K562 (cell line): ENCODE measurements at regions of chr9 and their contacts with region 1.

Region 1: DNA sequence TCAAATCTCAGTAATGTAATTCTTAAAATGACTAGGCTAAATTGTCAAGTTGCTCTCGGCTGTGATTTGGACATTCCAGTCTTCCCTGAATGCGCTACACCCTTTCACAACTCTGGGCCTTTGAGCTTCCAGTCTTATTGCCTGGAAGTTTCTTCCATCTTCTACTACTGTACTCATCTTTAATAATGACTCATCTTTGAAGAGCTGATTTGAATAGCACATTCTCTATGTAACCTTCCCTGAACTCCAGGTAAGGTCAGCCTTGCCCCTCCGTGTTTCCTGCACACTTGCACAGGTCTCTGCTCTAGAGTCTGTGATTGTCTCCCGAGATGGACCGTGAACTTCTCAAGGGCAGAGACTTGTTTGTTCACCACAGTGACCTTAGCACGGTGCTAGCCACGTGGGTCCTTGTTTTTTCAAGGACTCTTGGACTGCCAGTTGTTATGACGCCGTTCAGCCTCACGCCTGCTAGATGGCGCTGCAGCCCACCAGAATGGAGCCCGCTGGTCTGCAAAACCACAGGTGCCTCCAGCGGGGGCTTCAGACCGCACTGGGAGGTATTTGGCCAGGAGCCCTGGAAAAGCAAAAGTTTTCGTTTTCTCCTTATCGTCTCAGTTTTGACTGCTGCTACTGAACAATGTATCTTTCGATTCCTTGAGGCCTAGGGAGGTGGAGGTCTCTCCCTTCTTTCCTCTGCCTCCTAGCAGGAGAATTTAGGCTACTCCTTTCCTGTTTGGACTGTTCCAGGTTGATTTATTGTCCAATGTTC is 44.4 kb downstream of the SEC61B start:
- DNase-seq: peak; percentile 61 to 84 (median 73)
- ATAC-seq: peak; percentile 95
- H3K4me3 ChIP-seq: no peak overlapping the region
- H3K27ac ChIP-seq: no peak overlapping the region
- H3K4me1 ChIP-seq: peaks cover 3 to 4% of the 10 kb centered on the region in 2 experiments; a peak in 3 of 5 replicates
- H3K27me3 ChIP-seq: peaks cover 4 to 10% of the 10 kb centered on the region in 2 experiments; a peak in 3 of 5 replicates
- CTCF ChIP-seq: peak; percentile 92 to 96 (median 93)
- EP300 ChIP-seq: no peak
- POLR2A ChIP-seq: no peak
- RAD21 ChIP-seq: peak; percentile 89 to 90

Region 2: DNA sequence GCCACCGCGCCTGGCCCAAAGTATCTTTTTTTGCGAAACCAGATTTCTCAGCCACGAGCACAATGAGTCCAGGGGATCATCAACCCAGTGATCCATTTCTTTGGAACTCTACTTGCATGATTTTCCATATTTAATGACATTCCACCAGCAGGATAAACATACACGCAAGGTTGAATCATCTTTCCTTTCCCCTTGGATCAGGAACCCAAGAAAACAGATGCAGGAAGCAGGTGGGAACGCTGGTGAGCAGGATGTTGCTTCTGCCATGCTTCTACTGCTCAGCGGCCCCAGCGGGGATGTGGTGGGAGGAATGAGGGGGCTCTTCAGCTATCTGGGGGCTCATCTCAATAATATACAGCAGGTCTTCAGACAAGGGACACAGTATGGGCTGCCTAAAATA is 73.8 kb after region 1 on chr9:
- CTCF ChIA-PET with region 1: no interaction called
- POLR2A ChIA-PET with region 1: no interaction called
- in situ Hi-C with region 1: no loop called
- intact Hi-C with region 1: loop called (anchors 5 kb)
- DNase-seq: no peak
- ATAC-seq: no peak
- H3K4me3 ChIP-seq: no peak overlapping the region
- H3K27ac ChIP-seq: no peak overlapping the region
- H3K4me1 ChIP-seq: no peaks in the 10 kb centered on the region
- H3K27me3 ChIP-seq: peaks cover 9 to 30% of the 10 kb centered on the region in 2 experiments; a peak in 3 of 5 replicates
- CTCF ChIP-seq: no peak
- EP300 ChIP-seq: no peak
- POLR2A ChIP-seq: no peak
- RAD21 ChIP-seq: no peak

Region 3: DNA sequence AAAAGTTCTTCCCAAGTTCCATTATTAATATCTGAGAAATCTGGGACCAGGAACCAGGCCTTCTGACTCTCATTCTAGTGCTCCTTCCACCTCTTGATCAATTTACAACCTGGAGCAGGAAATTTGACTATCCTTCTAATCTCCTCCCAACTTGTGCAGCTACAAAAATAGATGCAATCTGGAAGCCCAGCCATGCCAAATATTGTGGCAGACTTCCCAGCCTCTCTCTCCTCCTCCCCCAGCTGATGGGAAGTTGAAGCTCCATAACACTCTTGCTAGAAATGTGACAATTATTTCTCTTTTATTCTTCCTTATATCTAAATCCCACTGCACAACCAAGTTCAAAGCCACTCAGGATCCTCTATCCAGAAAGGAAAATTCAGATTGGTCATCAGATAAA is 207.7 kb after region 1 on chr9:
- CTCF ChIA-PET with region 1: no interaction called
- POLR2A ChIA-PET with region 1: no interaction called
- in situ Hi-C with region 1: no loop called
- intact Hi-C with region 1: loop called (anchors 10 kb)
- DNase-seq: no peak
- ATAC-seq: no peak
- H3K4me3 ChIP-seq: no peak overlapping the region
- H3K27ac ChIP-seq: no peak overlapping the region
- H3K4me1 ChIP-seq: no peaks in the 10 kb centered on the region
- H3K27me3 ChIP-seq: peaks cover 2 to 5% of the 10 kb centered on the region in 2 experiments; a peak in 1 of 5 replicates
- CTCF ChIP-seq: no peak
- EP300 ChIP-seq: no peak
- POLR2A ChIP-seq: no peak
- RAD21 ChIP-seq: no peak

Region 4: DNA sequence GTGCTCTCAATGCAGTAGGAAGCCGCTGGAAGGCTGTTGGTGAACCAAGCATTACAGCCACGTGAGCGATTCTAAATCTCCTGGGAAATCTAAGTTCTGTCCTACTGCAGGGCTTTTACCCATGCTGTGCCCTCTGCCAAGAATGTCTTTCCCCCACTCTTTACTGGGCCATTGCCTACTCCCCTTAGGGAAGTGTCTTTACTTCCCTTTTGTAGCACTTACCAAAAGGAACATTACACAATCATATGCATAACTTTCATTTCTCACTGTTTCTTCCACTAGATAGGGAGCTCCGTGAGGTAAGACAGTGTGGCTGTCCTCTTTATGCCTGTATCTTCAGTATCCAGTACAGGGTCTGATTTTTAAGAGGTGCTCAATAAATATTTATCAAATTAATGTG is 313.5 kb after region 1 on chr9:
- CTCF ChIA-PET with region 1: no interaction called
- POLR2A ChIA-PET with region 1: no interaction called
- in situ Hi-C with region 1: no loop called
- intact Hi-C with region 1: loop called (anchors 10 kb)
- DNase-seq: no peak
- ATAC-seq: no peak
- H3K4me3 ChIP-seq: no peak overlapping the region
- H3K27ac ChIP-seq: no peak overlapping the region
- H3K4me1 ChIP-seq: no peaks in the 10 kb centered on the region
- H3K27me3 ChIP-seq: no peaks in the 10 kb centered on the region
- CTCF ChIP-seq: no peak
- EP300 ChIP-seq: no peak
- POLR2A ChIP-seq: no peak
- RAD21 ChIP-seq: no peak

Region 5: DNA sequence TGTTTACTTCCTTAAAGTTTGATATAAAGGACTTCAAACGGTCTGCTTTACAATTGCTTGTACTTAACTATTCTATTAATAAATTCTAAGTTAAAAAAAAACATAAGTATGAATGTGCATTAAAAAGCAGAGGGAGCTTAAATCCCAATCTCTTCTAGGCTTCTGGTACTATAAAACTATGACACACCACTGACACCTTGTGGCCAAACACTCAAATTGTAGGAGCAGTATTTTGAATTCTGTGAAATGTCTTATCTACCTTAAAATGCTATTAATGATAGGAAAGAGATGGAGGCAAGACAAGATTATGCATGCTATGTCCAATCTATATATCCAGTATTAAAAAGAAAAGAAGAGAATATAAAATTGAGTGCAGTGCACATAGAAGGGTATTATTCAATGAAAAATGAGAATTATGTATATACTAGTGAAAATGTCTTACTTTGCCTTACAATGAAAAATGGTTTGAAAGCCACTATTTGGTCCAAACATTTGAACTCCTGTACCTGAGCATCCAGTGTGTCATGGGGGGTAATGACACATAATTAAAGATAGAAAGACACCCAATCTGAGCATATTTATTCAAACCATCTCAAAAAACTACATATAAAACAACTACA is 744.7 kb after region 1 on chr9:
- CTCF ChIA-PET with region 1: interaction called, 3 read pairs
- POLR2A ChIA-PET with region 1: no interaction called
- in situ Hi-C with region 1: loop called (anchors 25 kb)
- intact Hi-C with region 1: loop called (anchors 5 kb)
- DNase-seq: peak; percentile 48 to 74 (median 59)
- ATAC-seq: peak; percentile 77; the same call in 2 of the 3 replicates
- H3K4me3 ChIP-seq: no peak overlapping the region
- H3K27ac ChIP-seq: no peak overlapping the region
- H3K4me1 ChIP-seq: no peaks in the 10 kb centered on the region
- H3K27me3 ChIP-seq: no peaks in the 10 kb centered on the region
- CTCF ChIP-seq: peak; percentile 49 to 79 (median 55); a peak in 5 of 6 replicates
- EP300 ChIP-seq: no peak
- POLR2A ChIP-seq: no peak
- RAD21 ChIP-seq: peak; percentile 83 to 90